AG04449 (cell line): ENCODE measurements at regions of chr17 and their contacts with region 1.

Region 1: DNA sequence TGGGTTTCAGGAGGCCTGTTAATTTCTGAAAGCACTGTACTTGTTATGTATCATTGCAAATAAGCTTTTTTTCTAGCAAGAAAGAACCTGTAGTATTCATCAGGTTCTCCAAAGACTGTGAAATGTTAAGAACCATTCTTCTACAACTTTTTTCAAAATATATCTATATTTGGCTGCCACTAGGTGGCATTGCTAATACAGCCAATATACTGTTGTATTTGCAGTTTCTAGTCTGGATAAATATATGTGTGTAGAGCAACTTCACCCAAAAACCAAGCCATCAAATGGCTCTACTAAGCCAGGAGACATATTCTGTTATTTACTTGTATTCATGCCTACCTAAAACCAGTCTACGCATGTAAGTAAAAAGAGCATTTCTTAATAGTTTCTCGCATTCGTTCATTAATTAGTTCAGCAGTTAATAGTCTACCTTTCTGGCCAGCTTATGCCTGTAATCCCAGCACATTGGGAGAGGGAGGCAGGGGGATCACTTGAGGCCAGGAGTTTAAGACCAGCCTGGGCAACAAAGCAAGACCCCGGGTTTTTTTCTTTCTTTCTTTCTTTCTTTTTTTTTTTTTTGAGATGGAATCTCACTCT is 39.5 kb downstream of the VMP1 start:
- DNase-seq: no peak
- H3K4me3 ChIP-seq: no peak overlapping the region
- CTCF ChIP-seq: peak; percentile 52

Region 2: GRCh38 chr17:59727817-59728533 is 19.0 kb before region 1 on chr17:
- CTCF ChIA-PET with region 1: interaction called, 30 read pairs
- POLR2A ChIA-PET with region 1: no interaction called
- DNase-seq: no peak
- H3K4me3 ChIP-seq: no peak overlapping the region
- CTCF ChIP-seq: no peak

Region 3: GRCh38 chr17:59734226-59734625 is 12.7 kb before region 1 on chr17:
- CTCF ChIA-PET with region 1: interaction called, 30 read pairs
- POLR2A ChIA-PET with region 1: no interaction called
- DNase-seq: no peak
- H3K4me3 ChIP-seq: no peak overlapping the region
- CTCF ChIP-seq: no peak

Region 4: DNA sequence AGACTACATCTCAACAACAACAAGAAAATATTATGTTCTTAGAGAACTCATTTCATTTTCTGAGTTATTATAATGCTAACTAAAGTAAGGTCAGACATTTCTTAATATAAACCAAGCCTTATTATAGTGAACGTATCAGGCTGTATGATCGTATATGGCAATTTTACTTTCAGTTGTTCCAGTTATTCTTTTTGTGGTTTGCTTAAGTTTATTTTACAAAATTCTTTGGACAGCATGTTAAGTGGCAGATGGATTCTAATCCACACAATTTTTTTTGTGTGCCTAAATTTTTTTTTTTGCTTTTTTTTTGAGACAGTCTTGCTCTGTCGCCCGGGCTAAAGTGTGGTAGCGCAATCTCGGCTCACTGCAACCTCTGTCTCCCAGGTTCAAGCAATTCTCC is 19.5 kb after region 1 on chr17:
- CTCF ChIA-PET with region 1: no interaction called
- POLR2A ChIA-PET with region 1: no interaction called
- DNase-seq: no peak
- H3K4me3 ChIP-seq: no peak overlapping the region
- CTCF ChIP-seq: no peak

Region 5: GRCh38 chr17:59846394-59847165 is 99.6 kb after region 1 on chr17:
- CTCF ChIA-PET with region 1: no interaction called
- POLR2A ChIA-PET with region 1: interaction called, 449 read pairs
- DNase-seq: no peak
- H3K4me3 ChIP-seq: no peak overlapping the region
- CTCF ChIP-seq: no peak

Region 6: DNA sequence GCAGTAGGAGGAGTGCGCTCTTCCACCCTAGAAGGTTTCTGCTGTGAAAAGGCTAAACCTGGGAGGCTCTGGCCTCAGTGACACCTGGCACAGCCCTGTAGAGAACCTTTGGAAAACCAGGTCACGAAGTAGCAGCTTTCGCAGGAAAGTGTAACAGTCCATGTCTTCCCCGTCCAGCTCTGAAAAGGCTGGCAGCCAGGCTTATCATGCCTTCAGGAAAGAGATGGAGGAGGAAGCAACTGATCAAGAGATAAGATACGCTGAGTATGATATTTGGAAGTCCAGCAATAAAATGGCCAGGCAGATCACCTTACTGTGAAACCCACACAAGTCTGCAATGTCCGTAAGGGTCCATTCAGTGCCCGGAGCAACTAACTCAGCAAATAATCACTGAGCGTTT is 123.5 kb after region 1 on chr17:
- CTCF ChIA-PET with region 1: interaction called, 12 read pairs
- POLR2A ChIA-PET with region 1: no interaction called
- DNase-seq: no peak
- H3K4me3 ChIP-seq: no peak overlapping the region
- CTCF ChIP-seq: no peak

Region 7: GRCh38 chr17:60036796-60037612 is 290.1 kb after region 1 on chr17:
- CTCF ChIA-PET with region 1: interaction called, 10 read pairs
- POLR2A ChIA-PET with region 1: no interaction called
- DNase-seq: no peak
- H3K4me3 ChIP-seq: no peak overlapping the region
- CTCF ChIP-seq: peak; percentile 97